ENCODE measurements at regions of chr6 and their contacts with region 1.

Region 1: DNA sequence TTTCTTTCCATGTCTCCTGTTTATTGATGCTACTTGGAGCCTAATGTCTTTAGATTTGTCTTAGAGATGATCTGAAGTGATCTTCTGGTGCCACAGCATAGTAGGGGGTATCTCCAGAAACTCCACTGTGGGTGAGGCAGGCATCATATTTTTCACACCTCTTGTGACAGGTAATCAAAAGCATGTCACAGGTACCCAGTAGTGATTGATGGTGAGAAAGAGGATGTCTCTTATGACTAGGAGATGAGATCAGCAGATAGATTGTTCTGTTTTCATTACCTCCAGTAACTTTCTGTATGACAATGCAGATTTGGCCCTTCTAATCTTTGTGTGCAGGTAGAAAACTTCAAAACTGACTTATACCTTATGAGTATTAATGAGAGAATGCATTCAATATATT is 13.5 kb downstream of the NCOA7 start:
- DNase-seq: no peak
- ATAC-seq: no peak
- H3K4me3 ChIP-seq: no peak overlapping the region
- H3K27ac ChIP-seq: no peak overlapping the region
- H3K4me1 ChIP-seq: no peaks in the 10 kb centered on the region
- H3K27me3 ChIP-seq: no peaks in the 10 kb centered on the region
- CTCF ChIP-seq: no peak

Region 2: GRCh38 chr6:125546841-125547251 is 257.4 kb before region 1 on chr6:
- CTCF ChIA-PET with region 1: interaction called, 12 read pairs
- POLR2A ChIA-PET with region 1: no interaction called
- in situ Hi-C with region 1: no loop called
- intact Hi-C with region 1: no loop called
- DNase-seq: no peak
- ATAC-seq: no peak
- H3K4me3 ChIP-seq: no peak overlapping the region
- H3K27ac ChIP-seq: no peak overlapping the region
- H3K4me1 ChIP-seq: no peaks in the 10 kb centered on the region
- H3K27me3 ChIP-seq: no peaks in the 10 kb centered on the region
- CTCF ChIP-seq: no peak

Region 3: GRCh38 chr6:125818225-125818657 is 14.0 kb after region 1 on chr6:
- CTCF ChIA-PET with region 1: no interaction called
- POLR2A ChIA-PET with region 1: interaction called, 23 read pairs
- in situ Hi-C with region 1: no loop called
- intact Hi-C with region 1: no loop called
- DNase-seq: no peak
- ATAC-seq: no peak
- H3K4me3 ChIP-seq: no peak overlapping the region
- H3K27ac ChIP-seq: no peak overlapping the region; the same call in 1 of the 2 replicates
- H3K4me1 ChIP-seq: peaks cover 41% of the 10 kb centered on the region
- H3K27me3 ChIP-seq: no peaks in the 10 kb centered on the region
- CTCF ChIP-seq: no peak

Region 4: GRCh38 chr6:126147291-126147815 is 343.1 kb after region 1 on chr6:
- CTCF ChIA-PET with region 1: interaction called, 13 read pairs
- POLR2A ChIA-PET with region 1: no interaction called
- in situ Hi-C with region 1: no loop called
- intact Hi-C with region 1: no loop called
- DNase-seq: no peak
- ATAC-seq: no peak
- H3K4me3 ChIP-seq: no peak overlapping the region
- H3K27ac ChIP-seq: no peak overlapping the region
- H3K4me1 ChIP-seq: no peaks in the 10 kb centered on the region
- H3K27me3 ChIP-seq: no peaks in the 10 kb centered on the region
- CTCF ChIP-seq: no peak